Activated naive CD4-positive, alpha-beta T cell treated with anti-CD3 and anti-CD28 coated beads for 36 hours (primary cell): ENCODE measurements at regions of chr6 and their contacts with region 1.

Region 1: DNA sequence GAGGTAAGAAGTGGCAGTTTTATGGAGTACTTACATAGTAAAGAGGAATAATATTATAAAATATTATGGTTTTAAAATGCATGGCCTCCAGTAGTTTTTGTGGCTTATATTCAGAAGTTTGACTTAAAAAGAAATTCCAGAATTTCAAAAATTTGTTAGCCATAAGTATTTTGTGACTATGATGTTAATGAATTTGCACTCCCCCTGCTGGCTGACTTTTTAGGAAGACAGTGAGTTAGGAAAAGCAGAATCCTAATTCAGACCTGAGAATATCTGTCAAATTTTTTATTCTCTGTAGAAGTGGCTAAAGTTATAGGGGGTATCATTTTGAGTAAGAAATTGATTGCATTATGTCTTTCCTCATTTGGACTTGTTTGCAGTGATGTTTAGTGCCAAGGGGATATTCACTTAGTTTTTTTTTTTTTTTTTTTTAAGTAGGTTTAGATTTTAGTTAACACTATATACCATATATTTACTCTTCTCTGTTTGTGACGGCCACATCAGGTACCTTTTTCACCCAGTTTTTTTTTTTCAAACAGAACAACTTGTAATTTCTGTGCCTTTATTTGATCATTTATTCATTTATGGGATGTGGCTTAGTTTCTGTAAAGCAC is 40.8 kb downstream of the ZFAND3 start:
- DNase-seq: peak; percentile 37
- H3K4me3 Mint-ChIP-seq: no peak overlapping the region
- H3K27ac Mint-ChIP-seq: no peak overlapping the region
- H3K4me1 Mint-ChIP-seq: peaks cover 78% of the 10 kb centered on the region
- H3K27me3 Mint-ChIP-seq: no peaks in the 10 kb centered on the region

Region 2: GRCh38 chr6:37602346-37602745 is 258.0 kb before region 1 on chr6:
- CTCF ChIA-PET with region 1: no interaction called
- intact Hi-C with region 1: no loop called
- DNase-seq: no peak
- H3K4me3 Mint-ChIP-seq: no peak overlapping the region
- H3K27ac Mint-ChIP-seq: no peak overlapping the region
- H3K4me1 Mint-ChIP-seq: no peaks in the 10 kb centered on the region
- H3K27me3 Mint-ChIP-seq: no peaks in the 10 kb centered on the region

Region 3: GRCh38 chr6:37698261-37699137 is 161.8 kb before region 1 on chr6:
- CTCF ChIA-PET with region 1: no interaction called
- intact Hi-C with region 1: loop called (anchors 5 kb)
- DNase-seq: peak; percentile 48
- H3K4me3 Mint-ChIP-seq: peak overlapping the region; percentile 98
- H3K27ac Mint-ChIP-seq: peak overlapping the region; percentile 82
- H3K4me1 Mint-ChIP-seq: peaks cover 18% of the 10 kb centered on the region
- H3K27me3 Mint-ChIP-seq: peaks cover 19% of the 10 kb centered on the region

Region 4: GRCh38 chr6:37791156-37791919 is 69.0 kb before region 1 on chr6:
- CTCF ChIA-PET with region 1: interaction called, 12 read pairs
- intact Hi-C with region 1: loop called (anchors 1 kb)
- DNase-seq: peak; percentile 95
- H3K4me3 Mint-ChIP-seq: no peak overlapping the region
- H3K27ac Mint-ChIP-seq: no peak overlapping the region
- H3K4me1 Mint-ChIP-seq: peaks cover 11% of the 10 kb centered on the region
- H3K27me3 Mint-ChIP-seq: no peaks in the 10 kb centered on the region

Region 5: DNA sequence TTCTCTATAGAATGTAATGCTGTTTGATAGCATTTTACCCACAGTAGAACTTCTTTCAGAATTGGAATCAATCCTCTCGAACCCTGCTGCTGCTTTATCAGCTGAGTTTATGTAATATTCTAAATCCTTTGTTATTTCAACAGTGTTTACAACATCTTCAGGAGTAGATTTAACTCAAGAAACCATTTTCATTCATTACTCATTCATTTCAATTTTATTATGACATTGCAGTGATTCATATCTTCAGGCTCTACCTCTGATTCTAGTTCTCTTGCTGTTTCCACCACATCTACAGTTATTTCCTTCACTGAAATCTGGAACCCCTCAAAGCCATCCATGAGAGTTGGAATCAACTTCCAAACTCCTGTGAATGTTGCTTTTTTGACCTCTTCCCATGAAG is 52.9 kb after region 1 on chr6:
- CTCF ChIA-PET with region 1: interaction called, 4 read pairs
- intact Hi-C with region 1: loop called (anchors 1 kb)
- DNase-seq: no peak
- H3K4me3 Mint-ChIP-seq: no peak overlapping the region
- H3K27ac Mint-ChIP-seq: no peak overlapping the region
- H3K4me1 Mint-ChIP-seq: peaks cover 51% of the 10 kb centered on the region
- H3K27me3 Mint-ChIP-seq: no peaks in the 10 kb centered on the region

Region 6: GRCh38 chr6:38131527-38131965 is 271.2 kb after region 1 on chr6:
- CTCF ChIA-PET with region 1: no interaction called
- intact Hi-C with region 1: loop called (anchors 2 kb)
- DNase-seq: peak; percentile 33
- H3K4me3 Mint-ChIP-seq: no peak overlapping the region
- H3K27ac Mint-ChIP-seq: peak overlapping the region; percentile 55
- H3K4me1 Mint-ChIP-seq: peaks cover 44% of the 10 kb centered on the region
- H3K27me3 Mint-ChIP-seq: no peaks in the 10 kb centered on the region